MCF 10A (cell line): ENCODE measurements at regions of chr22 and their contacts with region 1.

Region 1: GRCh38 chr22:46542011-46542985 is 4.9 kb upstream of the CELSR1 start:
- DNase-seq: peak; percentile 71
- H3K4me3 Mint-ChIP-seq: no peak overlapping the region
- H3K27ac Mint-ChIP-seq: no peak overlapping the region
- H3K4me1 Mint-ChIP-seq: peaks cover 20% of the 10 kb centered on the region
- H3K27me3 Mint-ChIP-seq: no peaks in the 10 kb centered on the region
- CTCF ChIP-seq: peak; percentile 88

Region 2: DNA sequence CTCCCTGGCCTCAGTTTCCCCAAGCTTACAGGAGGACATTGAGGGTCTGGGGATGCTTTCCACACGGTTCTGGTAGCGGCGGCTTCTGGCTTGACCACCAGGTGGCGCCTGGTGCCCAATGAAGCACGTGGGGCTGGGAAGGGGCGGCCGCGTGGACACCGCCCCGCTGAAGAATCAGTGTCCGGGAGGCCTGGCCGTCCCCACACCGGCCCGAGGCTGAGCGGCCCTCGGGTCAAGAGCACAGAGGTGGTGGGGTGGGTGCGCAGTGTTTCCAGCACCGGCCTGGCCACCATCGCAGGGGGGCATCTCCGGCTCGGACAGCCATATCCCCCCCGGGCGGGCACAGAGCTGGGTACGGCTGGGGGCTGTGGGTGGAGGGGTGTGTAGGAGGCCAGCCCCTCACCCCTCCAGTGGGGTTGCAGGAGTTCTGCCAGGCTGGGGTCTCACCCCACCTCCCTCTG is 419.8 kb before region 1 on chr22:
- CTCF ChIA-PET with region 1: interaction called, 3 read pairs
- POLR2A ChIA-PET with region 1: no interaction called
- intact Hi-C with region 1: loop called (anchors 1 kb)
- DNase-seq: peak; percentile 69
- H3K4me3 Mint-ChIP-seq: no peak overlapping the region
- H3K27ac Mint-ChIP-seq: no peak overlapping the region
- H3K4me1 Mint-ChIP-seq: peaks cover 5% of the 10 kb centered on the region
- H3K27me3 Mint-ChIP-seq: no peaks in the 10 kb centered on the region
- CTCF ChIP-seq: peak; percentile 79

Region 3: DNA sequence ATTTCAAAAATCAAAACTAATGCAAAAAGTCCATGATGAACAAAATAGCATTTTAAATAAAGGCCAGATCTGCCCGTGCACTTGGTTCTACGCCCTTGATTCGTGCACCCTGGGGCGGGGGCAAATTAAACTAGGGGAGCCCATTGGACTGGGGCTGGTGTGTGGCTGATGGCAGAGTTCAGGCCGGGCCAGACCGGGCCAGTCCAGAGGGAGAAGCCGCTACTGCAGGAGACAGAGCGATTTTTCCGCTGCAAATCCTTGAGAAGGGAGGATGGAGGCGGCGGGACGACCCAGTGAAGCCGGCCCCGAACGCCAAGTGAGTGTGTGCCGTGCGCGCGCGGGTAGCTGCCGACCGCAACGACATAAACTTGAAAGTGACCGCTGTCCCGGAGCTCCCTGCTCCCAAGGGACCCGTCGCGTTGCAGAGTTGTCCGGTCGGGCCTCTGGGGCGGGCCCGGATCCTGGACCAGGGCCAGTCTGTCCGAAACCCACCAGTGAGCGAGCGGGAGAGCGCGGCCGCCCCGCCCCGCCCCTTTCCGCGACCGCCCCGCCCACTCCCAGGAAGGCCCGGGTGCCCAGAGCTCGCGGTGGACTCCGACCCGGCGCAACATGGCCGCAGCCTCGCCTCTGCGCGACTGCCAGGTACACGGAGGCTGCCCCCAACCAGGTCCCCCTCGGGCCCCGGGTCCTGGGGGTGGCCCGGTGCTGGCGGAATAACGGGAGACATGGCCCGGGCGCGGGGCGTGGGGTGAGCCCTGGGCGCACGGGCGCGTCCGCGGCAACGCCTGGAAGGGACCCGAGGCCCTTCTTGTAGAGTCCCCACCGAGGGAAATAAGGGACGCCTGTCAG is 274.6 kb before region 1 on chr22 and contains the start of gene TTC38:
- CTCF ChIA-PET with region 1: no interaction called
- POLR2A ChIA-PET with region 1: no interaction called
- intact Hi-C with region 1: no loop called
- DNase-seq: peak; percentile 83
- H3K4me3 Mint-ChIP-seq: peak within 1 kb of the TSS; percentile 84
- H3K27ac Mint-ChIP-seq: peak within 1 kb of the TSS; percentile 82
- H3K4me1 Mint-ChIP-seq: peaks cover 14% of the 10 kb centered on the region
- H3K27me3 Mint-ChIP-seq: no peaks in the 10 kb centered on the region
- CTCF ChIP-seq: no peak
- total RNA-seq, gene TTC38: 16.7 and 17.8 TPM in 2 replicates

Region 4: DNA sequence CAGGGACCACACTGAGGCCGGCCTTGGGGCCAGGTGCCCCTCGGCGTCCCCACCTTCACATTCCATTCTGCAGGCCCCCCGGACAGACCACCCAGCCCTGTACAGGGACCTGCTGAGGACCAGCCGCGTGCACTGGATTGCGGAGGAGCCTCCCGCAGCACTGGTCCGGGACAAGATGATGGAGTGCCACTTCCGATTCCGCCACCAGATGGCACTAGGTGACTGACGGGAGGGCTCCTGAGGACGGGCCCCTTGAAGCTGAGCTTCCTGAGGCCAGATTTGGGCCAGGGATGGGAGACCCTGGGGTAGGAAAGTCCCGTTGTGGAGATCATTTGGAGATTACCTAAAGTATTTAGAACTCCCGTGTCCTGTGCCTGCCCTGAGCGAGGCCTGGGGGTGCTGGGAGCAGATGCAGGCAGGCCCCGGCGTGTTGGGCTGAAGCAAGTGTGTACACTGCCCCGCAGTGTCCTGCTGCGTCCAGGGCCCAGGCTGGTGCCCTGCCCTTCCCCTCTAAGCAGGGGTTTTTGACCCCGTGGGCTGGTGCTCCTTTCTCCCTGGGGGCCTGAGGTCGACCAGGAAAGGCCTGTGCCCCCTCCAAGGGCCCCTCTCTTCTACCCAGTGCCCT is 186.8 kb before region 1 on chr22:
- CTCF ChIA-PET with region 1: interaction called, 41 read pairs
- POLR2A ChIA-PET with region 1: interaction called, 8 read pairs
- intact Hi-C with region 1: loop called (anchors 1 kb)
- DNase-seq: peak; percentile 68
- H3K4me3 Mint-ChIP-seq: no peak overlapping the region
- H3K27ac Mint-ChIP-seq: peak overlapping the region; percentile 60
- H3K4me1 Mint-ChIP-seq: peaks cover 16% of the 10 kb centered on the region
- H3K27me3 Mint-ChIP-seq: no peaks in the 10 kb centered on the region
- CTCF ChIP-seq: peak; percentile 83

Region 5: GRCh38 chr22:46457524-46458488 is 84.5 kb before region 1 on chr22:
- CTCF ChIA-PET with region 1: interaction called, 5 read pairs
- POLR2A ChIA-PET with region 1: interaction called, 11 read pairs
- intact Hi-C with region 1: loop called (anchors 2 kb)
- DNase-seq: peak; percentile 56
- H3K4me3 Mint-ChIP-seq: peak overlapping the region; percentile 25
- H3K27ac Mint-ChIP-seq: peak overlapping the region; percentile 53
- H3K4me1 Mint-ChIP-seq: peaks cover 38% of the 10 kb centered on the region
- H3K27me3 Mint-ChIP-seq: no peaks in the 10 kb centered on the region
- CTCF ChIP-seq: no peak

Region 6: GRCh38 chr22:46528121-46528610 is 14.1 kb before region 1 on chr22:
- CTCF ChIA-PET with region 1: interaction called, 6 read pairs
- POLR2A ChIA-PET with region 1: interaction called, 69 read pairs
- intact Hi-C with region 1: no loop called
- DNase-seq: peak; percentile 98
- H3K4me3 Mint-ChIP-seq: peak overlapping the region; percentile 39
- H3K27ac Mint-ChIP-seq: peak overlapping the region; percentile 82
- H3K4me1 Mint-ChIP-seq: peaks cover 72% of the 10 kb centered on the region
- H3K27me3 Mint-ChIP-seq: no peaks in the 10 kb centered on the region
- CTCF ChIP-seq: no peak

Region 7: DNA sequence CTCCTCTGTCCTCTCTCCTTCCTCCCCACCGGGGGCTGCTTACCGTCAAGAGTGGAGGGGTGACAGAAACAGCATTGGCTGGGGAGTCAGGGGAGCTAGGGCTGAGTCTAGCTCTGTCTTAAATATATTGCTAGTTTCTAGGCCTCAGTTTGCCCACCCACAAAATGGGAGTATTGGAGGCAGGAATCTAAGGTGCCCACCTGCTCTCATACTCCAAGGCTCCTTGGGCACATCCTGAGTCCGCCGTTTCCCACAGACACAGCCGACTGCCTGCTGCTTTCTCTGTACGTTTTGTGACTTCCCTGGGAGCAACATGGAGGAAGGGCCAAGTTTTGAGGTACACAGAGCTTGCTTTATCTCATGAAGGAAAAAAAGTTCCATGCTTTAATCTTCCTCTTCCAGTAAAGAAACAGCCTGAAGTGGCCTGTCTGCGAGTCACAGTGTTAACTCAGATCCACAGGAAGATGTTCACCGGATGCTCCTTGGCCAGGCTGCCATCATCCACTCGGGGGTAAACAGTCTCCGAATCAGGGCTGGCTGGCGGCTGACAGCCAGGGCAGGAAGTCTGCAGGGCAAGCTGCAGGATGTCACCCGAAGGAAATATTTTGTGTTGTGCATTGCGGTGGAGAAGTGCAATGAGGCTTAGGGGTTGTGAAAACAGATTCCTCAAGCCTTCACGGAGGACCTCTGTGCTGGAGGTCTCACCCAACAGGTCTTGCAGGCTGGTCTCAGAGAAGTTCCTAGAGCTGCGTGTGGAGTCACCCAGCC is 206.8 kb after region 1 on chr22:
- CTCF ChIA-PET with region 1: no interaction called
- POLR2A ChIA-PET with region 1: no interaction called
- intact Hi-C with region 1: no loop called
- DNase-seq: no peak
- H3K4me3 Mint-ChIP-seq: no peak overlapping the region
- H3K27ac Mint-ChIP-seq: no peak overlapping the region
- H3K4me1 Mint-ChIP-seq: peaks cover 3% of the 10 kb centered on the region
- H3K27me3 Mint-ChIP-seq: peaks cover 10% of the 10 kb centered on the region
- CTCF ChIP-seq: no peak